Spleen (tissue), 13 donors: ENCODE measurements at regions of chr4 and their contacts with region 1.

Region 1: DNA sequence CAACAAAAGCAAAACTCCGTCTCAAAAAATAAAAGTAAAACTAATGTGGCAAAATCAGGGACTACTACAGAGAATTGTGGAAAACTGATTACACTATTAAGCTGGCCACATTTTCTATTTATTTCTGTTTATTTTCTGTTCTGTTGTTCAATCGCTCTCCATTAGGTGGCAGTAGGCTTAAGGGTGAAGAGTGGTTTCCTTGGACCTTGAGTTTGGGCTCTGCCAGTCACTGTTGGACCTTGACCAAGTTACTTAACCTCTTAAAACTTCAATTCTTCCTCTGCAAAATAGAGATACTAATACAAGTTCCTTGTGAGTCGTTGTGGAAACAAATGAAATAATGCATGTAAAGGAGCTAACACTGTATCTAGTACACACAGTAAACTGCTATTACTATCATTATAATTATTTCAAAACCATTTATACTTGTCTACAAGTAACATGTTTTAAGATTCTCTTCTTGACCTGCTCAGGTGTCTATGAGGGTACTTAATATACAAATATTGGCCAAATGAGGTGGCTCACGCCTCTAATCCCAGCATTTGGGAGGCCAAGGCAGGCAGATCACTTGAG is 15.2 kb downstream of the HSD17B11 start:
- DNase-seq: no peak
- H3K4me3 ChIP-seq: no peak overlapping the region
- H3K27ac ChIP-seq: peak overlapping the region in 1 of 8 donors; percentile 37
- H3K4me1 ChIP-seq: peaks cover 0 to 31% (median 4%) of the 10 kb centered on the region in 6 donors
- H3K27me3 ChIP-seq: no peaks in the 10 kb centered on the region
- CTCF ChIP-seq: peak; percentile 13 to 76 (median 62)
- POLR2A ChIP-seq: no peak

Region 2: DNA sequence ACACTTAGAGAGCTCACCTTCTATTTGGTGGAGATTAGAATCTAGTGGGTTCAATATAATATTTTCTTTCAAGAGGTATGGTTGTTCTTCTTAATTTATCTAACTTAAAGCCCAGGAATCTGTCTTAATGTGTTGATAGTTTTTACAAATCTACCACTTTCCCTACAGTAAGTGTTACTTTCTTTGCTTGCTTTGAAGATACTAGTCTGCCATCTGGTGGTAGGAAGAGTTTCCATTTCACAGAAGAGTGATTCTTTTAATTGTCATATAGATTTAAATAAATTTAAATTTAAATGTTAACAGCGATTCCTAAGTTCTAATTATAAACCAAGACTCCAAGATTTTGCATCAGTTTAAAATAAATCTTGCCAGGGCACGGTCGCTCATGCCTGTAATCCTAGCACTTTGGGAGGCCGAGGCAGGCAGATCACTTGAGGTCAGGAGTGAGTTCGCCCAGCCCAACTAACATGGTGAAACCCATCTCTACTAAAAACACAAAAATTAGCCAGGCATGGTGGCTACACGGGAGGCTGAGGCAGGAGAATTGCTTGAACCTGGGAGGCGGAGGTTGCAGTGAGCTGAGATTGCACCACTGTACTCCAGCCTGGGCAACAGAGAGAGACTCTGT is 90.0 kb after region 1 on chr4:
- intact Hi-C with region 1: loop called (anchors 5 kb)
- DNase-seq: no peak
- H3K4me3 ChIP-seq: no peak overlapping the region
- H3K27ac ChIP-seq: no peak overlapping the region
- H3K4me1 ChIP-seq: no peaks in the 10 kb centered on the region
- H3K27me3 ChIP-seq: no peaks in the 10 kb centered on the region
- CTCF ChIP-seq: peak in 10 of 11 experiments; percentile 38 to 73 (median 60)
- POLR2A ChIP-seq: no peak